ENCODE measurements at regions of chr12 and their contacts with region 1.

Region 1: DNA sequence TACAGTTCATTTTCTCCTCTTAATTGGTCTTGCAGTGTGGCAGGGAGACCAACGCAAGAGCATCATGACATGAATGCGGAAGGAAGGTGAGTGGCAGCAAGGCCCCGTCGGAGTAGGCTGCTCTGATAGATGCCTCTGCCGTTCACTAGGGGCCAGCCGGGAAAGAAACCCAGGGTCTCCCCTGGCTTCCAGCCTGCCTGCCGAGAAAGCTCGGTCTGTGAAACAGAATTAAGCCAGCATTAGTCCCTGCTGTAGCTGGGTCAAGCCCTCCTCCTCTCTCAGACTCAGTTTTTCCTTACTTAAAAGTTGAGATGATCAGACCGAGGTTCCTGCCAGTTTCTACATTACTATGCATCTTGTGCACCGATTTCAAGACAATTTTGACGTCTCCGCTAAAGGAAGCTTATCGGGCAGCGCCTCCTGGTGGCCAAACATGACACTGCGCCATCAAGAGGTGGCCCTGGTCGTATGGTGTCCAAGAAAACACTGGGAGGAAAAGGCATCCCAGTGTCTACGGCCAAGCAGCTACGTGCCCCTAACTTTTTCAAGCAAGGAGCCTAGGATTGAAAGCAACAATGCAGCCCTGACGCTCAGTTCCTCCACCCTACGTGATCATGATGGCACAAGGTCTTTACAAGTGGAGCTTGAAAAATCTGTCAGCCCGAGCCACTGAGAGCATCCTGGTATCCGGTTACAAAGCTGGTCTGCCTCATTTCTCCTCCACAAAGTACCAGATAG is 131.6 kb downstream of the KSR2 start:
- DNase-seq: peak; percentile 82
- H3K4me3 ChIP-seq: no peak overlapping the region
- H3K27ac ChIP-seq: no peak overlapping the region
- H3K4me1 ChIP-seq: peaks cover 0 to 4% (median 0%) of the 10 kb centered on the region in 4 donors
- H3K27me3 ChIP-seq: no peaks in the 10 kb centered on the region
- CTCF ChIP-seq: peak; percentile 91 to 96 (median 94)
- EP300 ChIP-seq: no peak
- POLR2A ChIP-seq: no peak

Region 2: DNA sequence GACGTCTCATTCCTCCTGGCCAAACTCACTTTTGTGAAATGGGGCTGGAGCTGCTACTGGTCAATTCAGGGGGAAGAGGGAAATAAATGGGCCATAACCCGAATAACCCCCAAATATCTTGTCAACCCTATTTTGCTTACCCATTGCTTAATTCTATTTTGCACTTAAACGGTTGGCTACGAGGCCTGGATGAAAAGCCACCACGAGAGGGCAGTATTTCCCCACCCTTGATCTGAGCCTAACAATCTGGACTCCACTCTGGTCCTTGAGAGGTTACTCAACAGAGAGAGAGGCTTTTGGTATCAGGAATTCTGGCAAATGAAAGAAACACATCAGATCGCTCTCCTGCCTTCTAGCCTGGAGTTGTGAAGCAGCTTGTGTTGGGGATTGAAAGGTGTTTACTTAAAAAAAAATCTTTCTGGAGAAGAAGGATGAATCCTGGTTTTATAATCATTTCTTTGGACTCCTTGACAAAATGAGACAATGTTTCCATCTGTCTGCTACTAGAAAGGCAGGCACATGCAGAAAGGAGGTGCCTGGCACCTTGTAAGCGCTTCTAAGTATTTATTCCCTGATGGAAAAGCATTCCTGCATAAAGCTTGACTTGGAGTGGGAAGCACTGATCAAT is 624.5 kb before region 1 on chr12:
- in situ Hi-C with region 1: loop called in 2 of 4 experiments (anchors 10 to 25 kb)
- intact Hi-C with region 1: no loop called
- DNase-seq: peak; percentile 69
- H3K4me3 ChIP-seq: no peak overlapping the region
- H3K27ac ChIP-seq: no peak overlapping the region
- H3K4me1 ChIP-seq: no peaks in the 10 kb centered on the region
- H3K27me3 ChIP-seq: peaks cover 3% of the 10 kb centered on the region
- CTCF ChIP-seq: peak; percentile 71 to 90 (median 80)
- EP300 ChIP-seq: no peak
- POLR2A ChIP-seq: no peak

Region 3: GRCh38 chr12:117228239-117228638 is 608.9 kb before region 1 on chr12:
- in situ Hi-C with region 1: loop called in 3 of 4 experiments (anchors 10 to 25 kb)
- intact Hi-C with region 1: no loop called
- DNase-seq: no peak
- H3K4me3 ChIP-seq: no peak overlapping the region
- H3K27ac ChIP-seq: no peak overlapping the region
- H3K4me1 ChIP-seq: no peaks in the 10 kb centered on the region
- H3K27me3 ChIP-seq: no peaks in the 10 kb centered on the region
- CTCF ChIP-seq: no peak
- EP300 ChIP-seq: no peak
- POLR2A ChIP-seq: no peak

Region 4: DNA sequence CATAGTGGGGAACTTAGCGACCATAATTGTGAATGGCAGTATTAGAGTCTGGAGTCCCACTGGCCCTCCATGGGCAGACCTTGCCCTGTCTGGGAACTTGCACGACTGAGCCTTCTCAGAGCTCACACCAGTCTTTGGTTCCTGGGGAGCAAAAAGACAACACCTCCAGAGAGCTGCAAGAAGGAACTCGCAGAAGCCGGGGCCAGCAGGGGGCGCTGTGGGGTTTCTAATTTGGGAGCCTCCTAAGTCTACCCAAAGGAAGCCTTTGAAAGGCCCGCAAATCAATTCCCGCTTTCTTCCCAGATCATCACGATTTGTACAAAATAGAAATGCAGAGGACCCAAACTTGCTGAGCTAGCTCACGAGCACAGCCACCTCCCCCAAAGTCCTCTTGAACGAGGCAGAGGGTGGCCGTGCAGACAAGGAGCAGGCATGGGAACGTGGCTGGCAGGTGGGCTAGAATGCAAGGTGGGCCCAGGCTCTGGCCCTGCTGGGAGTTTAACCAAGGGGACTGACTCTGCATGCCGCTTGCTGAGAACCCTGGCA is 600.6 kb before region 1 on chr12:
- in situ Hi-C with region 1: loop called in 1 of 4 experiments (anchors 25 kb)
- intact Hi-C with region 1: no loop called
- DNase-seq: peak; percentile 78
- H3K4me3 ChIP-seq: no peak overlapping the region
- H3K27ac ChIP-seq: no peak overlapping the region
- H3K4me1 ChIP-seq: no peaks in the 10 kb centered on the region
- H3K27me3 ChIP-seq: peaks cover 15% of the 10 kb centered on the region
- CTCF ChIP-seq: peak; percentile 51 to 76 (median 70)
- EP300 ChIP-seq: no peak
- POLR2A ChIP-seq: no peak

Region 5: GRCh38 chr12:117367011-117367638 is 470.0 kb before region 1 on chr12:
- in situ Hi-C with region 1: loop called (anchors 5 to 25 kb)
- intact Hi-C with region 1: loop called (anchors 5 kb)
- DNase-seq: peak; percentile 78
- H3K4me3 ChIP-seq: no peak overlapping the region
- H3K27ac ChIP-seq: no peak overlapping the region
- H3K4me1 ChIP-seq: no peaks in the 10 kb centered on the region
- H3K27me3 ChIP-seq: peaks cover 39% of the 10 kb centered on the region
- CTCF ChIP-seq: peak; percentile 81 to 91 (median 87)
- EP300 ChIP-seq: no peak
- POLR2A ChIP-seq: no peak

Region 6: GRCh38 chr12:117587631-117588287 is 249.4 kb before region 1 on chr12:
- in situ Hi-C with region 1: loop called in 2 of 4 experiments (anchors 25 kb)
- intact Hi-C with region 1: no loop called
- DNase-seq: peak; percentile 48
- H3K4me3 ChIP-seq: no peak overlapping the region
- H3K27ac ChIP-seq: no peak overlapping the region
- H3K4me1 ChIP-seq: no peaks in the 10 kb centered on the region
- H3K27me3 ChIP-seq: peaks cover 3% of the 10 kb centered on the region
- CTCF ChIP-seq: peak; percentile 64 to 88 (median 81)
- EP300 ChIP-seq: no peak
- POLR2A ChIP-seq: no peak

Measured in transverse colon (tissue), 4 donors.